CD14-positive monocyte (primary cell): ENCODE measurements at regions of chr20 and their contacts with region 1.

Region 1: DNA sequence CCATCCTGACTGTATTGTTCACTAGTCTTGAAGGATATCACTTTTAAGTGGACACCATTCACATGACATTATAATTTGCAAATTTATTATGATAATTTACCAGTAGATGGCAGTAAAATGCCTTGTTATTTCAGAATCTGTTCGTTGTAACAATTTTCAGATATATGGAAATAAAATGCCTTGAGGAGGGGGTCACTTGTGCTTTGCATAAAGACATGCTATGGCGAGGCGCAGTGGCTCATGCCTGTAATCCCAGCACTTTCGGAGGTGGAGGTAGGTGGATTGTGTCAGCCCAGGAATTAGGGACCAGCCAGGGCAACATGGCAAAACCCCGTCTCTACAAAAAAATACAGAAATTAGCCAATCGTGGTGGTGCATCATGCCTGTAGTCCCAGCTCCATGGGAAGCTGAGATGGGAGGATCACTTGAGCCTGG is 9.0 kb upstream of the NCOA6 start:
- DNase-seq: peak; percentile 20 to 54 (median 24)
- H3K4me3 ChIP-seq: no peak overlapping the region
- H3K4me3 Mint-ChIP-seq: no peak overlapping the region
- H3K27ac ChIP-seq: no peak overlapping the region
- H3K27ac Mint-ChIP-seq: peak overlapping the region in 2 of 7 donors; percentile 63 to 70
- H3K4me1 ChIP-seq: peaks cover 11% of the 10 kb centered on the region in 2 donors
- H3K4me1 Mint-ChIP-seq: peaks cover 9% of the 10 kb centered on the region
- H3K27me3 ChIP-seq: no peaks in the 10 kb centered on the region
- H3K27me3 Mint-ChIP-seq: peaks cover 2 to 5% (median 4%) of the 10 kb centered on the region in 3 donors
- CTCF ChIP-seq: peak; percentile 63

Region 2: GRCh38 chr20:34968042-34968775 is 133.7 kb after region 1 on chr20:
- intact Hi-C with region 1: loop called in 1 of 2 experiments (anchors 5 kb)
- DNase-seq: no peak
- H3K4me3 ChIP-seq: no peak overlapping the region
- H3K4me3 Mint-ChIP-seq: no peak overlapping the region
- H3K27ac ChIP-seq: no peak overlapping the region
- H3K27ac Mint-ChIP-seq: peak overlapping the region in 1 of 7 donors; percentile 57
- H3K4me1 ChIP-seq: no peaks in the 10 kb centered on the region
- H3K4me1 Mint-ChIP-seq: no peaks in the 10 kb centered on the region
- H3K27me3 ChIP-seq: no peaks in the 10 kb centered on the region
- H3K27me3 Mint-ChIP-seq: peaks cover 0 to 2% (median 2%) of the 10 kb centered on the region in 3 donors
- CTCF ChIP-seq: no peak

Region 3: DNA sequence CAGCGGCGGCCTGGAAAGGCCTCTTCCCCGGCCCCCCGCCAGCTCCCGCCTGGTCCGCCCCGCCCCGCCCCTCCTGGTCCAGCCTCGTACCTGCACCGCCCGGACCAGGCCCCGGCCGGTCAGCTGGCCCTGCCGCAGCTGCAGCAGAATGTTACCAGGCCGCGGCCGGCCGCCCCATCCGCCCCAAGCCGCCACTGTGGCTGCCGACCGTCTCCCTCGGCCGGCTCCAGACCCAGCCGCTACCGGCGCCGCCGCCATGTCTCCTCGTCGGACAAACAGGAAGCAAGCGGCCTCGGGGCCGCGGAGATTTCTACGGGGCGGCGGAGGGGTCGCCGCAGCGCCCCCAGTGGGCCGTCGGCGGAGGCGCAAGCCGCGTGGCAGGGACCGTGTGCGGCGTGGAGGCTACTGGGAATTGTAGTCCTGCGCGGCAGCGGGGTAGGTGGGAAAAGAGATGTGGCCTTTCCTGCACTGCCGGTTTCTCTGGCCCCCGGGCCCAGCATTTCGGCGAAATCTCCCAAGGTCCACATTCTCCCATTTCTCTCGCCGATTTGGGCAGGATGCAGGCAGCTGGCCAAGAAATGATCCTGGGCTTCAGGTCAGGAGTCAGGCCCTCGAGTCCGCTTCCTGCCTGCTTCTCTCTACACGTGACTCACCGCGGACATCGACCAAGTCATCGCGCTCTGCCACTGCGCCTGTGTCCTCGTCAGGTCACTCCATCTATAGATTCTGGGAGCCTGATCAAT is 258.2 kb after region 1 on chr20 and contains the start of gene TRPC4AP:
- intact Hi-C with region 1: loop called in 1 of 2 experiments (anchors 5 kb)
- DNase-seq: peak; percentile 86 to 89 (median 87)
- H3K4me3 ChIP-seq: peak within 1 kb of the TSS; percentile 90 to 95 (median 92)
- H3K4me3 Mint-ChIP-seq: peak within 1 kb of the TSS; percentile 91 to 94
- H3K27ac ChIP-seq: peak within 1 kb of the TSS; percentile 84 to 90
- H3K27ac Mint-ChIP-seq: peak within 1 kb of the TSS; percentile 94 to 99 (median 97)
- H3K4me1 ChIP-seq: peaks cover 43 to 56% of the 10 kb centered on the region in 2 donors
- H3K4me1 Mint-ChIP-seq: peaks cover 54% of the 10 kb centered on the region
- H3K27me3 ChIP-seq: no peaks in the 10 kb centered on the region
- H3K27me3 Mint-ChIP-seq: peaks cover 0 to 10% (median 1%) of the 10 kb centered on the region in 3 donors
- CTCF ChIP-seq: peak; percentile 98
- polyA plus RNA-seq, gene TRPC4AP: 80.8 to 98.4 (median 88.6) TPM

Region 4: DNA sequence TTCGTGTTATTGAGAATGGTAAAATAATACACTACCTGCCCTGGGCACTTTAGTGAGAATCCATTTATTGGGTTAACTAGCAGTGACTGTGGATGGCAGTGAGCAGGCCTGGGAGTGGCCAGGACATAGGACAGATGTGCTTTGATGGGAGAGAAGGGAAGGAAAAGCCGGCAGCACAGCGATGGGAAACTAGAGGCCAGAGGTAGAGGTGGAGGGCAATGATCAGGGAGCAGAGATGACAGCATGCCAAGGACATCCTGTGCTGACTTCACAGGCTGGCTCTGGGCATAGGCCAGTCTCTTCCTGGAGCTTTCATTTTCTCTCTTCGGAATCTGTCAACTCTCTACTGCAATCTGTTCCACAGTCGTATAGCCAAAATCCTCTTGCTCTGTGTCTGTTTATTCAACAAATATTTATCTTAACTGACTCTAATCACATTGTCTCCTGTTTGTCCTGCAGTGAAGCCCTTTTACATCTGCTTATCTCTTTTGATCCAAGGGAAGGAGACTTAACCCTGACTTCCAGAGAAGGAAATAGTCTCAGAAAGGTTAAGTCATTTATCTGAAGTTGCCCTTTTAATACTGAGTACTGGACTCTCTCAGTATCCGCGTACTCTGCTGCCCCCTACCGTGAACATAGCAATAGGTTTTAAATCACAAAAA is 373.6 kb after region 1 on chr20:
- intact Hi-C with region 1: loop called (anchors 5 kb)
- DNase-seq: peak; percentile 58 to 71 (median 66)
- H3K4me3 ChIP-seq: no peak overlapping the region
- H3K4me3 Mint-ChIP-seq: no peak overlapping the region
- H3K27ac ChIP-seq: no peak overlapping the region
- H3K27ac Mint-ChIP-seq: no peak overlapping the region
- H3K4me1 ChIP-seq: no peaks in the 10 kb centered on the region
- H3K4me1 Mint-ChIP-seq: no peaks in the 10 kb centered on the region
- H3K27me3 ChIP-seq: no peaks in the 10 kb centered on the region
- H3K27me3 Mint-ChIP-seq: peaks cover 0 to 4% (median 0%) of the 10 kb centered on the region in 3 donors
- CTCF ChIP-seq: peak; percentile 77

Region 5: GRCh38 chr20:35502352-35502751 is 667.9 kb after region 1 on chr20:
- intact Hi-C with region 1: no loop called
- DNase-seq: peak; percentile 12 to 21 (median 14)
- H3K4me3 ChIP-seq: no peak overlapping the region
- H3K4me3 Mint-ChIP-seq: no peak overlapping the region
- H3K27ac ChIP-seq: peak overlapping the region in 1 of 2 donors; percentile 21
- H3K27ac Mint-ChIP-seq: peak overlapping the region in 4 of 7 donors; percentile 34 to 79 (median 53)
- H3K4me1 ChIP-seq: no peaks in the 10 kb centered on the region
- H3K4me1 Mint-ChIP-seq: peaks cover 8% of the 10 kb centered on the region
- H3K27me3 ChIP-seq: no peaks in the 10 kb centered on the region
- H3K27me3 Mint-ChIP-seq: no peaks in the 10 kb centered on the region
- CTCF ChIP-seq: no peak